Activated CD4-positive, alpha-beta memory T cell treated with anti-CD3 and anti-CD28 coated beads for 36 hours (primary cell): ENCODE measurements at regions of chr18 and their contacts with region 1.

Region 1: GRCh38 chr18:63422087-63422809 is at the start of gene VPS4B:
- DNase-seq: peak; percentile 100
- H3K4me3 Mint-ChIP-seq: peak within 1 kb of the TSS; percentile 95
- H3K27ac Mint-ChIP-seq: peak within 1 kb of the TSS; percentile 97
- H3K4me1 Mint-ChIP-seq: peaks cover 33% of the 10 kb centered on the region
- H3K27me3 Mint-ChIP-seq: peaks cover 5% of the 10 kb centered on the region
- total RNA-seq, gene VPS4B: 41.7 to 43.3 TPM

Region 2: GRCh38 chr18:62186774-62187542 is 1235.3 kb before region 1 on chr18 and contains the starts of genes PIGN and RELCH:
- CTCF ChIA-PET with region 1: no interaction called
- POLR2A ChIA-PET with region 1: no interaction called
- intact Hi-C with region 1: loop called (anchors 1 kb)
- DNase-seq: peak; percentile 97
- H3K4me3 Mint-ChIP-seq: peak within 1 kb of the TSS; percentile 99
- H3K27ac Mint-ChIP-seq: peak within 1 kb of the TSS; percentile 93
- H3K4me1 Mint-ChIP-seq: peaks cover 51% of the 10 kb centered on the region
- H3K27me3 Mint-ChIP-seq: no peaks in the 10 kb centered on the region
- total RNA-seq, gene PIGN: 26.2 to 27.8 TPM
- total RNA-seq, gene RELCH: 16.1 to 17.7 TPM

Region 3: DNA sequence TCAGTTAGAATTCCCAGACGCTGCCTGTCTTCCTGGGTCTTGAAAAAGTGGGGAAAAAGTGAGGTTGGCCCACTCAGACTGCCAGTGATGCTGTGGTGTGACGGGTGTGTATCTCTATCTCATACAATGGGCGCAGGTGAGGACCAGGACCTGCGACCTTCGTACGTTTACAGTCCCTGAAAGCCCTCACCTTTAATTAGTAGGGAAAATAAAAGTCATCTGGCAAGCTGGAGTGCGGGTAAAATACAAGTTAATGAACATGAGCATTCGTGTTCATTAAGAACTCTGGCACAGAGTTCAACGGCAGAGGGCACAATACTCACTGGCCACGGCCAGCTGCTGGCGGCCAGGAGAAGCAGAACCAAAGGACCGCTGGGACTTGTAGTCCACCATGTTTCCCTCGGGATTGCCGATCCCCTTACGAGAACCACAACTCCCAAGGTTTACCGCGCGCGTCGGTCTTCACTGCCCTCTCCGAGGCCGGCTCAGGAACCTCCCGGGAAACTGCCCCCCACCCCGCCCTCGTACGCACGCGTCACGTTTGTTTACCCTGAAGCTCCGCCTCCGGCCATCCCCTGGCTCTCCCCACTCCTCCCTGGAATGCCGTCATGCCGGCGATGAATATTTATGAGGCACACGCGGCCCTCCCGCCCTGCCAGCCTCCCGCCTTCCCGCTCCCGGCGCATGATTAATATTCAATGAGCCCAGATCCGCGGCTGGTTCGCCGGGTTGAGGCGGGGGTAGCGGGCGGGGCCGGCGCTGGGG is 707.4 kb before region 1 on chr18:
- CTCF ChIA-PET with region 1: no interaction called
- POLR2A ChIA-PET with region 1: no interaction called
- intact Hi-C with region 1: loop called (anchors 1 kb)
- DNase-seq: peak; percentile 97
- H3K4me3 Mint-ChIP-seq: peak overlapping the region; percentile 78
- H3K27ac Mint-ChIP-seq: peak overlapping the region; percentile 66
- H3K4me1 Mint-ChIP-seq: peaks cover 31% of the 10 kb centered on the region
- H3K27me3 Mint-ChIP-seq: peaks cover 2% of the 10 kb centered on the region

Region 4: GRCh38 chr18:63284827-63285733 is 137.2 kb before region 1 on chr18:
- CTCF ChIA-PET with region 1: no interaction called
- POLR2A ChIA-PET with region 1: no interaction called
- intact Hi-C with region 1: no loop called
- DNase-seq: peak; percentile 23
- H3K4me3 Mint-ChIP-seq: no peak overlapping the region
- H3K27ac Mint-ChIP-seq: no peak overlapping the region
- H3K4me1 Mint-ChIP-seq: peaks cover 50% of the 10 kb centered on the region
- H3K27me3 Mint-ChIP-seq: no peaks in the 10 kb centered on the region

Region 5: GRCh38 chr18:63329431-63330145 is 92.7 kb before region 1 on chr18:
- CTCF ChIA-PET with region 1: no interaction called
- POLR2A ChIA-PET with region 1: no interaction called
- intact Hi-C with region 1: no loop called
- DNase-seq: no peak
- H3K4me3 Mint-ChIP-seq: no peak overlapping the region
- H3K27ac Mint-ChIP-seq: no peak overlapping the region
- H3K4me1 Mint-ChIP-seq: no peaks in the 10 kb centered on the region
- H3K27me3 Mint-ChIP-seq: no peaks in the 10 kb centered on the region

Region 6: DNA sequence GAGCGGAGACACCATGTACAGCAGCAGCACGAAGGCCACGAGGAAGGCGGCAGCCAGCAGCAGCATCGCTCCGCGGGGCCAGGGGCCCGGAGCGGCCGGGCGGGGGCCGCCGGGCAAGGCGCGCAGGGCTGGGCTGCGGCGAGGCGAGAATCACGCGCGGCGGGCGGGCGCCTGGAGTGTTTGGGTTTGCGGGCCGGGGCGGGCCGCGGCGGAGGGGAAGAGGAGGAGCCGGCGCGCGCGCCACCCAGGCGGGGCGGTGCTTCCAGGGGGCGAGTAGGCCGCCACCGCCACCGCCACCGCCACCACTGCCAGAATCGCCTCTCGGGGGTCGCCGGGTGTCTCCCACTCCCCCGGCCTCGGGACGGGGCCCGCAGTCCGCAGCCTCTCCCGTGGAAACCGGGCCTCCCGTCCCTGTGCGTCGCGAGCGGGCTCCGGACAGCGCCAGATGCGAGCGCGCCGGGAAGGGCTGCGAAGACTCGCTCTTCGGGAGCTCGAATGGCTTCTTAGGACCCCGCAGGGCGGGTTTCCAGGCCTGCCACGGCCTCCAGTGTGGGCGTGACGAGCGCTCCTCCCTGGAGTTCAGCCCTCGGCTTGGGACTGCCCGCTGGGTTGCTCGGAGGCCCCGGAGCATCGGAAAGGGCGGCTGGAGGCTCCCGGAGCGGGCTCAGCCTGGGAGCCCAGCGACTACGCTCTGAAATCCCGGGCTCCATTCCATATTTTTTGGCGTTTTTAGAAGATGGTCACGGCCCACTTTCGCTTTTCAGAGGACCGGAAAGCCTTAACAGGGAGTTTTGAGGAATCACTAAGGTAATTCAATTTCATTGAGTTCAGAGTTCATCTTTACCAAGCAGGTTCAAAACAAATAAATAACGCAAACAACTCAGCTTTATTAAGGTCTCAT is 54.9 kb before region 1 on chr18 and contains the start of gene KDSR:
- CTCF ChIA-PET with region 1: interaction called, 3 read pairs
- POLR2A ChIA-PET with region 1: interaction called, 13 read pairs
- intact Hi-C with region 1: loop called (anchors 1 kb)
- DNase-seq: peak; percentile 89
- H3K4me3 Mint-ChIP-seq: peak within 1 kb of the TSS; percentile 90
- H3K27ac Mint-ChIP-seq: peak within 1 kb of the TSS; percentile 86
- H3K4me1 Mint-ChIP-seq: peaks cover 29% of the 10 kb centered on the region
- H3K27me3 Mint-ChIP-seq: no peaks in the 10 kb centered on the region
- total RNA-seq, gene KDSR: 72.8 to 77.2 TPM

Region 7: GRCh38 chr18:63402246-63403162 is 19.7 kb before region 1 on chr18:
- CTCF ChIA-PET with region 1: no interaction called
- POLR2A ChIA-PET with region 1: no interaction called
- intact Hi-C with region 1: loop called (anchors 1 kb)
- DNase-seq: no peak
- H3K4me3 Mint-ChIP-seq: no peak overlapping the region
- H3K27ac Mint-ChIP-seq: peak overlapping the region; percentile 57
- H3K4me1 Mint-ChIP-seq: peaks cover 26% of the 10 kb centered on the region
- H3K27me3 Mint-ChIP-seq: no peaks in the 10 kb centered on the region

Region 8: GRCh38 chr18:63439334-63439733 is 17.1 kb after region 1 on chr18:
- CTCF ChIA-PET with region 1: interaction called, 7 read pairs
- POLR2A ChIA-PET with region 1: interaction called, 4 read pairs
- intact Hi-C with region 1: loop called (anchors 1 kb)
- DNase-seq: peak; percentile 54
- H3K4me3 Mint-ChIP-seq: no peak overlapping the region
- H3K27ac Mint-ChIP-seq: no peak overlapping the region
- H3K4me1 Mint-ChIP-seq: no peaks in the 10 kb centered on the region
- H3K27me3 Mint-ChIP-seq: peaks cover 7% of the 10 kb centered on the region

Region 9: GRCh38 chr18:63505566-63506335 is 83.5 kb after region 1 on chr18:
- CTCF ChIA-PET with region 1: no interaction called
- POLR2A ChIA-PET with region 1: no interaction called
- intact Hi-C with region 1: no loop called
- DNase-seq: peak; percentile 30
- H3K4me3 Mint-ChIP-seq: no peak overlapping the region
- H3K27ac Mint-ChIP-seq: no peak overlapping the region
- H3K4me1 Mint-ChIP-seq: no peaks in the 10 kb centered on the region
- H3K27me3 Mint-ChIP-seq: peaks cover 19% of the 10 kb centered on the region

Region 10: DNA sequence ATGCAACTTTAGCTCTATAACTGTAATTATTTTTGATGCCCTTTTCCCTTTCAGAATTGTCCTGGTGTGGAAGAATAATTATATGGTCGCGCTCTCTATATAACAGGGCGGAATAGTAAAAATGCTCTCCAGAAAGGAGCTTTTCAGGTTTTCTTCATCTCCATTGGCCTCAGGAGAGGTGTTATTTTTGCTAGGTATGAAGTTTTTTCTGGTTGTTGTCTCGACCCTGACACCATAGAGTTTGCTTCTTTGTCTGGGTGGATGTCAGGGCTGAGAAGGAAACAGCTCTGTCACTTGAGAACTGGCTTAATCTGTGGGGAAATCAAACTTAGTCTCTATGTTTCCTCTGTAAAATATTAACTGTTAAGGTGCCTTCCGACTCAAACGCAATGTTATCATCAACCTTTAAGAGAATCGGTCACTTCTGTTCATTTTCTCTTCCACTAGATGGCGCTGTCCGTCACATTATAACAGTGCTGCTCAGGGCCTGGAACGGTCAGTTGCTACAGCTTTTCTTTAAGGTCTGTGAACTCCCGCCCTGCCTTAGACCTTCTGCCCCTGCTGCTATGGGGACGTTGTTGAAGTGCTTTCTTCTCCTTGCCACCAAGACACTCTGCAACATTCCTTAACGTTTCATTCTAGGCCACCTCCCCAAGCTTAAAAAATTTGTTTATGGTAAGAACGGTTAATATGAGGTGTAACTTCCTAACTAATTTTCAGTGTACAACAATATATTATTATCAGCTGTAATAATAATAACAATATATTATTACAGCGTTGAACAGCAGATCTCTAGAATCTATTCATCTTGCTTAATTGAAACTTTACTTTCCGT is 96.1 kb after region 1 on chr18:
- CTCF ChIA-PET with region 1: no interaction called
- POLR2A ChIA-PET with region 1: no interaction called
- intact Hi-C with region 1: no loop called
- DNase-seq: peak; percentile 62
- H3K4me3 Mint-ChIP-seq: no peak overlapping the region
- H3K27ac Mint-ChIP-seq: no peak overlapping the region
- H3K4me1 Mint-ChIP-seq: no peaks in the 10 kb centered on the region
- H3K27me3 Mint-ChIP-seq: peaks cover 5% of the 10 kb centered on the region

Region 11: GRCh38 chr18:63969960-63970802 is 547.9 kb after region 1 on chr18 and contains the start of gene SERPINB8:
- CTCF ChIA-PET with region 1: no interaction called
- POLR2A ChIA-PET with region 1: no interaction called
- intact Hi-C with region 1: loop called (anchors 1 kb)
- DNase-seq: peak; percentile 91
- H3K4me3 Mint-ChIP-seq: peak within 1 kb of the TSS; percentile 88
- H3K27ac Mint-ChIP-seq: peak within 1 kb of the TSS; percentile 95
- H3K4me1 Mint-ChIP-seq: peaks cover 41% of the 10 kb centered on the region
- H3K27me3 Mint-ChIP-seq: no peaks in the 10 kb centered on the region
- total RNA-seq, gene SERPINB8: 14.6 to 14.9 TPM